ENCODE measurements at regions of chr4 and their contacts with region 1.

Region 1: GRCh38 chr4:184437565-184438265 is 36.6 kb downstream of the IRF2 start:
- DNase-seq: peak; percentile 37
- H3K4me3 ChIP-seq: no peak overlapping the region
- H3K27ac ChIP-seq: no peak overlapping the region
- H3K4me1 ChIP-seq: peaks cover 6% of the 10 kb centered on the region
- CTCF ChIP-seq: 0 out of 2 replicates have a peak, but pooled peaks have one; percentile 16

Region 2: DNA sequence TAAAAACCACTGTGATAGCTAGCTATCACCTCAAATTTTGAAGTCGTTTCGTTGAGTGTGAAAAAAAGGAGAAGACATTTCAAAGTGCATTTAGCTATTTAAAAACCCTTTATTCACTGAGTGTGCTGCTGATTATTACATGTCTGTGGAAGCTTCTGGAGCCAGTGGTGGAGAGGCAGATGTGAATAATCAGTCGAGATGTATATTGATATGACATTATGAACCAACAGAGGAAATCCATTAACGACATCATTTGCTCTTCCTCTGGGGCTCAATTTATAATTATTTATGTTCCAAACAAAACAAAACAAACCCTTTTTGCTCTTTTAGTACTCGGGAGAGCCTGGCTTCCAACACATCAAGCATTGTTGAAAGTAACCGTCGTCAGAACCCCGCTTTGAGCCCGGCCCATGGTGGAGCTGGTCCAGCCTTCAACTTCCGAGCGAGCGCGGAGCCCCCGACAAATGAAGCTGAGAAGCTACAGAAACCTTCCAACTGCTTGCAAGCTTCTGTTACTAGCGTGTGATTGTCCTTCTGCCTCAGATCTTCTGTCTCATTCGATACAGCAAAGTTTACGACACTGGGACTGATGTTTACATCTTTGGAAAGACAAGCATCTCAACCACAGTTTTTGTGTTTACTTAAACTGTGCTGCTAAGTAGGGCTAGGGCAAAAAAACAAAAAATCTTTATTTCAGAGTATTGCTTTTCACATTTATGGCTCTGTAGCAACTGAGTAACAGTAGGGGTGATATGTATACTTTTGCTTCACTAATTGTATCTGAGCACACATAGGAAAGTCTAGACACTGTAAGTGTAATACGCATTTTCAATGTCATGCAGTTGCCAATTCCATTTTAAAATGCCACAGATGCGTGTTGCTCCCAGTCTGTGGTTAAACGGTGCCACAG is 420.7 kb before region 1 on chr4:
- CTCF ChIA-PET with region 1: no interaction called
- POLR2A ChIA-PET with region 1: no interaction called
- intact Hi-C with region 1: no loop called
- DNase-seq: no peak
- H3K4me3 ChIP-seq: no peak overlapping the region
- H3K27ac ChIP-seq: no peak overlapping the region
- H3K4me1 ChIP-seq: no peaks in the 10 kb centered on the region
- CTCF ChIP-seq: no peak

Region 3: GRCh38 chr4:184420881-184421416 is 16.8 kb before region 1 on chr4:
- CTCF ChIA-PET with region 1: no interaction called
- POLR2A ChIA-PET with region 1: interaction called, 10 read pairs
- intact Hi-C with region 1: no loop called
- DNase-seq: peak; percentile 36
- H3K4me3 ChIP-seq: peak overlapping the region; percentile 9
- H3K27ac ChIP-seq: no peak overlapping the region
- H3K4me1 ChIP-seq: peaks cover 41% of the 10 kb centered on the region
- CTCF ChIP-seq: no peak

Region 4: GRCh38 chr4:185108669-185109068 is 671.0 kb after region 1 on chr4:
- CTCF ChIA-PET with region 1: no interaction called
- POLR2A ChIA-PET with region 1: no interaction called
- intact Hi-C with region 1: no loop called
- DNase-seq: no peak
- H3K4me3 ChIP-seq: no peak overlapping the region
- H3K27ac ChIP-seq: no peak overlapping the region
- H3K4me1 ChIP-seq: no peaks in the 10 kb centered on the region
- CTCF ChIP-seq: no peak